ENCODE measurements at regions of chr3 and their contacts with region 1.

Region 1: GRCh38 chr3:176994876-176995781 is 202.2 kb downstream of the TBL1XR1 start:
- DNase-seq: no peak
- H3K4me3 Mint-ChIP-seq: no peak overlapping the region
- H3K27ac Mint-ChIP-seq: no peak overlapping the region
- H3K4me1 Mint-ChIP-seq: no peaks in the 10 kb centered on the region
- H3K27me3 Mint-ChIP-seq: no peaks in the 10 kb centered on the region
- CTCF ChIP-seq: no peak

Region 2: DNA sequence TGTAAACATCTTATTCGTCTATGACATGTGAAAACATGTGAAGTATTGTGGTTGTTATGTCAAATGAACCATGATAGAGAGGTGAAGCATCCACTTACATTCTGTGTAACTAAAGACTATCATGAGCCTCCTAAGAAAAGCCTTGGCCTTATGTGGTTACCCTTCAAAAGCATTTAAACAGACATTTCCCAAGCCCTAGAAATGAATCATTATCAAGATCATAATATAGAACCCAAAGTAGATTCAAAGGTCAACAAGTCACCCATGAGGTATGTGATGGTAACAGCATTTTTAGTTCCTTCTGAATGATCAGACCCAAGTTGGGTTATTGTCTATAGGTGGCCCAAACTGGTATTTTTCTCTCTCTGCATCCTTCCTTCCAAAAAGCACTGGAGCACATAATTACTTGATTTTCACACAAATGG is 205.8 kb before region 1 on chr3:
- CTCF ChIA-PET with region 1: no interaction called
- intact Hi-C with region 1: no loop called
- DNase-seq: no peak
- H3K4me3 Mint-ChIP-seq: no peak overlapping the region
- H3K27ac Mint-ChIP-seq: no peak overlapping the region
- H3K4me1 Mint-ChIP-seq: no peaks in the 10 kb centered on the region
- H3K27me3 Mint-ChIP-seq: no peaks in the 10 kb centered on the region
- CTCF ChIP-seq: no peak

Region 3: GRCh38 chr3:177041730-177042551 is 46.8 kb after region 1 on chr3:
- CTCF ChIA-PET with region 1: no interaction called
- intact Hi-C with region 1: loop called (anchors 1 kb)
- DNase-seq: no peak
- H3K4me3 Mint-ChIP-seq: no peak overlapping the region
- H3K27ac Mint-ChIP-seq: peak overlapping the region; percentile 5
- H3K4me1 Mint-ChIP-seq: peaks cover 18% of the 10 kb centered on the region
- H3K27me3 Mint-ChIP-seq: no peaks in the 10 kb centered on the region
- CTCF ChIP-seq: no peak

Region 4: DNA sequence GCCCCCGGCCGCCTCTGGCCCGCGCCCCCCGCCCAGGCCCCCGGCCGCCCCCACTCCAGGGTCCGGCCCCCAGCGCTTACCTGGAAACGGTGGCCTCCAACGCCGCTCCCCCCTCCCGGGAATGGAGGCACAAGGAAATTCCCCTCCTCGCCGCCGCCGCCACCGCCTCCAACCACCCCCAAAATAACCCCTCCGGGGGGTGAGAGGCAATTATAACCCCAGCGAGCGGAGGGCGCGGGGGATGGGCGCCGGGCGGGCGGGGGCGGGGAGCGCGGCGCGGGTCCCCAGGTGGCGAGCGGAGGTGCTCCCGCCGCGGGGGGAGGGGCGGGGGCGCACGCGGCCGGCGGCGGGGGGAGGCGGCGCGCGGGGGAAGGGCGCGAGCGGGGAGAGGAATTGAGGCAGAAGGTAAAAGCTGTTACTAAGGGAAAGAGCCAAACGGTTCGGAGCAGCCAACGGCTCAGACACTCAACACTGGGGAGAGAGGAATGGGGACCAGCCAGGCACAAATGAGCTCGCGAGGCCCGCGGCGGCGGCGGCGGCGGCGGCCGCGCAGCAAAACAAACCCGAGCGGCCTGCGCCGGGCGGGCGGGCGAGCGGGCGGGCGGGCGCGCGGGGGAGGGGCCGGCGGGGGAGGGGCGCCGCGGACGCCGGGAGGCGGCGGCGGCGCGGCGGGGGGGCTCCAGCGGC is 202.1 kb after region 1 on chr3 and contains the start of gene TBL1XR1:
- CTCF ChIA-PET with region 1: no interaction called
- intact Hi-C with region 1: no loop called
- DNase-seq: peak; percentile 94
- H3K4me3 Mint-ChIP-seq: peak within 1 kb of the TSS; percentile 70
- H3K27ac Mint-ChIP-seq: peak within 1 kb of the TSS; percentile 71
- H3K4me1 Mint-ChIP-seq: peaks cover 32% of the 10 kb centered on the region
- H3K27me3 Mint-ChIP-seq: no peaks in the 10 kb centered on the region
- CTCF ChIP-seq: no peak
- total RNA-seq, gene TBL1XR1: 199 and 206 TPM in 2 replicates

Region 5: GRCh38 chr3:177468331-177468730 is 473.2 kb after region 1 on chr3:
- CTCF ChIA-PET with region 1: no interaction called
- intact Hi-C with region 1: no loop called
- DNase-seq: no peak
- H3K4me3 Mint-ChIP-seq: no peak overlapping the region
- H3K27ac Mint-ChIP-seq: no peak overlapping the region
- H3K4me1 Mint-ChIP-seq: peaks cover 13% of the 10 kb centered on the region
- H3K27me3 Mint-ChIP-seq: no peaks in the 10 kb centered on the region
- CTCF ChIP-seq: no peak

Region 6: GRCh38 chr3:178295292-178295912 is 1300.3 kb after region 1 on chr3:
- CTCF ChIA-PET with region 1: no interaction called
- intact Hi-C with region 1: no loop called
- DNase-seq: no peak
- H3K4me3 Mint-ChIP-seq: no peak overlapping the region
- H3K27ac Mint-ChIP-seq: no peak overlapping the region
- H3K4me1 Mint-ChIP-seq: no peaks in the 10 kb centered on the region
- H3K27me3 Mint-ChIP-seq: no peaks in the 10 kb centered on the region
- CTCF ChIP-seq: no peak

Region 7: DNA sequence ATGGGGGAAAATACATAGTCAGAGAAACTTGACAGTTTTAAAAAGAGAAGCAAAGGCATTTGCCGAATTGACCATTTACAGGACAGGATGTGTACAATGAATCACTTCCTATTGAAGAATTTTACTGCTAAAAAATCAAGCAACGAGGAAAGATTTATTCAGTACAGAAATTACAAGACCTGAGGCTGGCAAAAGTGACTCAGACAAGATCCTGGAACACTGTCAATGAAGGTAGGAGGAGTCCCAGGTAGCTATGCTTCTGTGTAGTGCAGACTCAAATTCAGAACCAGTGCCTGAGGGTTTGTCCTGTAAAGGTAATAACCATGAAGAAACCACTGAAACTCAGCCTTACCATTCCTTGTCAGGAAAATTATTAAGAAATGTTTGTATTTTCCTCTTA is 1955.5 kb after region 1 on chr3:
- CTCF ChIA-PET with region 1: no interaction called
- intact Hi-C with region 1: loop called (anchors 5 kb)
- DNase-seq: no peak
- H3K4me3 Mint-ChIP-seq: no peak overlapping the region
- H3K27ac Mint-ChIP-seq: no peak overlapping the region
- H3K4me1 Mint-ChIP-seq: no peaks in the 10 kb centered on the region
- H3K27me3 Mint-ChIP-seq: no peaks in the 10 kb centered on the region
- CTCF ChIP-seq: no peak

Measured in Calu3 (cell line).